Activated CD4-positive, alpha-beta T cell treated with anti-CD3 and anti-CD28 coated beads, Interleukin-2, amount 10 ng/mL, durations not matched to agents 24 days and 14 days (primary cell): ENCODE measurements at regions of chr4 and their contacts with region 1.

Region 1: GRCh38 chr4:22410645-22411247 is 105.1 kb downstream of the ADGRA3 start:
- DNase-seq: no peak
- H3K4me3 Mint-ChIP-seq: no peak overlapping the region
- H3K27ac Mint-ChIP-seq: no peak overlapping the region
- H3K4me1 Mint-ChIP-seq: no peaks in the 10 kb centered on the region
- H3K27me3 Mint-ChIP-seq: no peaks in the 10 kb centered on the region

Region 2: DNA sequence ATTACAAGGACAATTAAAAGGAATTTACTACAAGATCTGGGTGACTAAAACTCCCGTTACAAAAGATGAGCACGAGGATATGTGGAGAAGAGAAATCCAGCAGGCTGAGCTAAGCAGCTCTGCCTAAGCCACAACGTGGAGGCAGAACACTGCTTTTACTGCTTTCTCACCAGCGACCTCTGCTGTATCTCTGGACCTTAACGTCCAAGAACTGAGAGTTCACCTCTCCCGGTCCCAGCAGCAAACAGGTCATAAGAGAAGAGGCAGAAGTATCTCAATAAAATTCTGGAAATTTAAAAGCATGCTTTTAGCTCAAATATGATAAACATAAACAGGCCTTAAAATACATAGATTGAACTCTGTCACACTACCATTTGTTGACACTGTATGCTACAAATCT is 24.1 kb after region 1 on chr4:
- intact Hi-C with region 1: loop called (anchors 2 kb)
- DNase-seq: peak; percentile 68
- H3K4me3 Mint-ChIP-seq: no peak overlapping the region
- H3K27ac Mint-ChIP-seq: no peak overlapping the region
- H3K4me1 Mint-ChIP-seq: peaks cover 4% of the 10 kb centered on the region
- H3K27me3 Mint-ChIP-seq: no peaks in the 10 kb centered on the region

Region 3: DNA sequence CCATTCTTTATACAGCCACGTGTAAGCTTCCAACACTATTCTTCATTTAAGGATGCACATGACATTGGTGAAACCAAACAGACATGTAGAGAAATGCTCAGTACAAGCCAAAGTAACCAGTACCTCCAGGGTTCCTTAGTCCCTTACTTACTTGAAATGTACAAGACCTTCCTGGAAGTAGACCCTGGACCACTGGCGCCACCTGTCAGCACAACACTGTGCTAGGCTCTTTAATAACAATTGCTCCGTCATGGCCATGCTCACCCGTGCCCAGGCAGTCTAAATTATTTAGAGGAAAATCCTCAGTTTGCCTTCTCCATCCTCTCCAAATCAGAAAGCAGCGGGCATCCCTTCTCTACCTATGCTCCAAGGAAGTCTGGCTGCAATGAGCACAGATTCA is 52.4 kb after region 1 on chr4:
- intact Hi-C with region 1: loop called (anchors 1 kb)
- DNase-seq: peak; percentile 63
- H3K4me3 Mint-ChIP-seq: no peak overlapping the region
- H3K27ac Mint-ChIP-seq: no peak overlapping the region
- H3K4me1 Mint-ChIP-seq: peaks cover 3% of the 10 kb centered on the region
- H3K27me3 Mint-ChIP-seq: no peaks in the 10 kb centered on the region

Region 4: GRCh38 chr4:22515145-22515887 is 104.6 kb after region 1 on chr4:
- intact Hi-C with region 1: loop called (anchors 5 kb)
- DNase-seq: peak; percentile 83
- H3K4me3 Mint-ChIP-seq: peak overlapping the region; percentile 100
- H3K27ac Mint-ChIP-seq: peak overlapping the region; percentile 96
- H3K4me1 Mint-ChIP-seq: peaks cover 21% of the 10 kb centered on the region
- H3K27me3 Mint-ChIP-seq: peaks cover 7% of the 10 kb centered on the region

Region 5: GRCh38 chr4:22607382-22607781 is 196.6 kb after region 1 on chr4:
- intact Hi-C with region 1: loop called (anchors 1 kb)
- DNase-seq: peak; percentile 80
- H3K4me3 Mint-ChIP-seq: no peak overlapping the region
- H3K27ac Mint-ChIP-seq: no peak overlapping the region
- H3K4me1 Mint-ChIP-seq: peaks cover 8% of the 10 kb centered on the region
- H3K27me3 Mint-ChIP-seq: no peaks in the 10 kb centered on the region

Region 6: GRCh38 chr4:22688236-22688635 is 277.5 kb after region 1 on chr4:
- intact Hi-C with region 1: loop called (anchors 1 kb)
- DNase-seq: no peak
- H3K4me3 Mint-ChIP-seq: no peak overlapping the region
- H3K27ac Mint-ChIP-seq: no peak overlapping the region
- H3K4me1 Mint-ChIP-seq: peaks cover 3% of the 10 kb centered on the region
- H3K27me3 Mint-ChIP-seq: peaks cover 6% of the 10 kb centered on the region